ENCODE measurements at regions of chr21 and their contacts with region 1.

Region 1: DNA sequence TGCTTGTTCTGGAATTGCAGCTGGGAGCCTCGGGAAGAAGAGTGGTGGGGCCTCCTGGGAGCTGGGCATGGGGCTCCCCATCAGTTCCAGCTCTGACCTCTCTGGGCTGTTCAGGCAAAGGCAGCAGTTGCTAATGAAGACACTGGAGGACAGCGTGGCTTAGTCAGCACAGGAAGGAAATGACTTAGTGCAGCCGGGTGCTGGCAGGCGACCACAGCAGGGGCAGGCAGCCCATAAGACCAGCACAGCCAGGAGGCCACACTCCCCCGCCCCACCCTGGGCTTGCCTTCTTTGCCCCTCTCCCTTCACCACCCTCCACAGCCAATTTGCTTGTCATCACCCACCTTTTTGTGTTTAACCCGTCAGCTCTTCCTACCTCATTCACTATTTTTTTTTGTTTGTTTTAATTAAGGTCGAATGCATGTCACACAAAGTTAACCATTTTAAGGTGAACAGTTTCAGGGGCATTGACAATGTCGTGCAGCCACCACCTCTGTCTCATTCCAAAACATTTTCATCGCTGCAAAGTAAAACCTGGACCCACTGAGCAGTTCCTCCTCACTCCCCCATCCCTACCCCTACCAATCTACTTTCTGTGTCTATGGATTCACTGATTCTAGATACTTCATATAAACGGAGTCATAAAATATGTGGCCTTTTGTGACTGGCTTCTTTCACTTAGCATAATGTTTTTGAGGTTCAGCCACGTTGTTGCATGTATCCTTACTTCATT is 10.9 kb downstream of the OLIG2 start:
- DNase-seq: peak; percentile 92 to 96 (median 94)
- H3K4me3 ChIP-seq: peak overlapping the region in 1 of 3 experiments; percentile 26
- H3K4me3 Mint-ChIP-seq: peak overlapping the region; percentile 40 to 69
- H3K27ac ChIP-seq: peak overlapping the region; percentile 86 to 92
- H3K27ac Mint-ChIP-seq: peak overlapping the region; percentile 91 to 98 (median 96)
- H3K4me1 ChIP-seq: peaks cover 34 to 38% of the 10 kb centered on the region in 2 donors
- H3K4me1 Mint-ChIP-seq: peaks cover 47% of the 10 kb centered on the region
- H3K27me3 ChIP-seq: peaks cover 6 to 28% of the 10 kb centered on the region in 2 donors
- H3K27me3 Mint-ChIP-seq: peaks cover 7 to 31% (median 30%) of the 10 kb centered on the region in 3 donors
- CTCF ChIP-seq: no peak

Region 2: DNA sequence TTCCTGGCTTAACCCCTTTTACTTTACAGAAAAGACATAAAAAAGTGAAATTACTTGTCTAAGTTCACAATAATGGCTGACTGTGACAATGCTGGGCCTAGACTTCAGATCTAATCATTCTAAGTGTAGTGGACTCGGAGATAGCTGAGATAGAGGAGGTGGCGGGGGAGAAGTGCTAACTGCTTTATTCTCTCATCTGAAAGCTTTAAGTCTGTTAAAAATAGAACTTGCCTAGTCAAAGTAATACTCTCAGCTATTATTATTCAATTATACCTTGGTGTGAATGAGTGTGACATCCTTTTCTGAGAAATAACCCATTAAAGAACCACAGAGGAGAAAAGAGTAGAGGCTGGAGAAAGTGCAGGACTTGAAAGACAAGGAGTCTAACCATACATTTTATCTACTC is 107.0 kb before region 1 on chr21:
- intact Hi-C with region 1: no loop called
- DNase-seq: no peak
- H3K4me3 ChIP-seq: no peak overlapping the region
- H3K4me3 Mint-ChIP-seq: no peak overlapping the region
- H3K27ac ChIP-seq: no peak overlapping the region
- H3K27ac Mint-ChIP-seq: no peak overlapping the region
- H3K4me1 ChIP-seq: peaks cover 10 to 13% of the 10 kb centered on the region in 2 donors
- H3K4me1 Mint-ChIP-seq: peaks cover 8% of the 10 kb centered on the region
- H3K27me3 ChIP-seq: no peaks in the 10 kb centered on the region
- H3K27me3 Mint-ChIP-seq: peaks cover 0 to 7% (median 3%) of the 10 kb centered on the region in 3 donors
- CTCF ChIP-seq: no peak

Region 3: GRCh38 chr21:33101300-33102005 is 64.9 kb after region 1 on chr21:
- intact Hi-C with region 1: loop called in 1 of 2 experiments (anchors 5 kb)
- DNase-seq: peak; percentile 80 to 89 (median 82)
- H3K4me3 ChIP-seq: no peak overlapping the region
- H3K4me3 Mint-ChIP-seq: peak overlapping the region in 1 of 2 donors; percentile 53
- H3K27ac ChIP-seq: no peak overlapping the region
- H3K27ac Mint-ChIP-seq: peak overlapping the region in 6 of 7 donors; percentile 10 to 79 (median 30)
- H3K4me1 ChIP-seq: peaks cover 15 to 18% of the 10 kb centered on the region in 2 donors
- H3K4me1 Mint-ChIP-seq: peaks cover 21% of the 10 kb centered on the region
- H3K27me3 ChIP-seq: no peaks in the 10 kb centered on the region
- H3K27me3 Mint-ChIP-seq: peaks cover 7 to 13% (median 8%) of the 10 kb centered on the region in 3 donors
- CTCF ChIP-seq: peak; percentile 77